MCF 10A (cell line): ENCODE measurements at regions of chr9 and their contacts with region 1.

Region 1: GRCh38 chr9:71716138-71716909 is 52.0 kb downstream of the CEMIP2 start:
- DNase-seq: no peak
- H3K4me3 Mint-ChIP-seq: no peak overlapping the region
- H3K27ac Mint-ChIP-seq: peak overlapping the region; percentile 54
- H3K4me1 Mint-ChIP-seq: peaks cover 19% of the 10 kb centered on the region
- H3K27me3 Mint-ChIP-seq: no peaks in the 10 kb centered on the region
- CTCF ChIP-seq: peak; percentile 42

Region 2: GRCh38 chr9:71490810-71491209 is 225.5 kb before region 1 on chr9:
- CTCF ChIA-PET with region 1: interaction called, 8 read pairs
- POLR2A ChIA-PET with region 1: interaction called, 3 read pairs
- intact Hi-C with region 1: loop called (anchors 5 kb)
- DNase-seq: peak; percentile 33
- H3K4me3 Mint-ChIP-seq: no peak overlapping the region
- H3K27ac Mint-ChIP-seq: no peak overlapping the region
- H3K4me1 Mint-ChIP-seq: peaks cover 3% of the 10 kb centered on the region
- H3K27me3 Mint-ChIP-seq: no peaks in the 10 kb centered on the region
- CTCF ChIP-seq: peak; percentile 50

Region 3: DNA sequence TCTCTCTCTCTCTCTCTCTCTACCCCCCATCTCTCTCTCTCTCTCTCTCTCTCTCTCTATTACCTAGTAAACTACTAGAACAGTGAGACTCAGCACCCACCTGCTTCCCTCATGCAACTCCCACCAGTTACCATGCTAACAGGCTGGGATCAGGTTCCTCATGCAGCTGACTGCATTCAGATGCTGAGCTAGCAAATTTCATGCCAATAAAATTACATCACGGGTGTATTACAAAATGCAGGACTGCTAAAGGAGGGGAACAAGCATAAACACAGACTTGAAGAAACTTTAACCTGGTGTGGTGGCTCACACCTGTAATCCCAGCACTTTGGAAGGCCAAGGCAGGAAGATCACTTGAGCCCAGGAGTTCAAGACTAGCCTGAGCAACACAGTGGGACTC is 24.0 kb before region 1 on chr9:
- CTCF ChIA-PET with region 1: interaction called, 42 read pairs
- POLR2A ChIA-PET with region 1: interaction called, 6 read pairs
- intact Hi-C with region 1: no loop called
- DNase-seq: peak; percentile 70
- H3K4me3 Mint-ChIP-seq: no peak overlapping the region
- H3K27ac Mint-ChIP-seq: no peak overlapping the region
- H3K4me1 Mint-ChIP-seq: peaks cover 13% of the 10 kb centered on the region
- H3K27me3 Mint-ChIP-seq: no peaks in the 10 kb centered on the region
- CTCF ChIP-seq: no peak

Region 4: DNA sequence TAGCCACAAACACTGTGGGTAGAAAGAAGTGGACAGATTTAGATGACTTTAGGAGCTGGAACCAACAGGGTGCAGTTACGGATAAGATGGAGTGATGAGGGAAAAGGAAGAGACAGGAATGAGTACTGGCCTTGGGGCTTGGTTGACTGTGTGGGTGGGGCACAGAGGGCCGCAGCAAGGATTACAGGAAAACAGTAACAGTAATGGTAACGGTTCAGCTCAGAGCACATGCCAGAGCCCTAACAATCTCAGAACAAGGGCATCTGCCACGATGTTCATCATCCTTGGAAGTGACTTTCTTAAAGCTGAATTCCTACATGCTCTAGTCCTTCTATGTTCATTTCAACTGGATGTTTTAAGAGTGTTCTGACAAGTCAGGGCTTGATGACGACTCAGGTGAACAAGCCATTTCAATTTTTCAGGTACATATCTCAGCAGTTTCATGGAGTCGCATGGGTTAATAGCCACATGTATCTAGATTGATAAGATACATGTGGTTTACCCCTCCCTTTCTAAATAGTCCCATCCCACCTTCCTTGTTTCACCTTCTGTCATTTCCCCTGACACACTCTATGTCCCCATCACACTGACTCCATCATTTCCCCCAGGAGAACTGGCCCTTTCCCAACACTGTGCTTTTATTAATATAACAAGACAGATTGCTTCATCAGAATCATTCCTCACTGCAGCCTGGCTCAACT is 13.0 kb before region 1 on chr9:
- CTCF ChIA-PET with region 1: interaction called, 27 read pairs
- POLR2A ChIA-PET with region 1: interaction called, 6 read pairs
- intact Hi-C with region 1: no loop called
- DNase-seq: peak; percentile 76
- H3K4me3 Mint-ChIP-seq: no peak overlapping the region
- H3K27ac Mint-ChIP-seq: peak overlapping the region; percentile 20
- H3K4me1 Mint-ChIP-seq: peaks cover 17% of the 10 kb centered on the region
- H3K27me3 Mint-ChIP-seq: no peaks in the 10 kb centered on the region
- CTCF ChIP-seq: no peak